PC-9 (cell line): ENCODE measurements at regions of chrX and their contacts with region 1.

Region 1: GRCh38 chrX:53116101-53116500 is 22.2 kb downstream of the KANTR start:
- DNase-seq: no peak
- H3K4me3 ChIP-seq: no peak overlapping the region
- H3K27ac ChIP-seq: no peak overlapping the region
- H3K4me1 ChIP-seq: no peaks in the 10 kb centered on the region
- H3K27me3 ChIP-seq: no peaks in the 10 kb centered on the region
- CTCF ChIP-seq: no peak

Region 2: DNA sequence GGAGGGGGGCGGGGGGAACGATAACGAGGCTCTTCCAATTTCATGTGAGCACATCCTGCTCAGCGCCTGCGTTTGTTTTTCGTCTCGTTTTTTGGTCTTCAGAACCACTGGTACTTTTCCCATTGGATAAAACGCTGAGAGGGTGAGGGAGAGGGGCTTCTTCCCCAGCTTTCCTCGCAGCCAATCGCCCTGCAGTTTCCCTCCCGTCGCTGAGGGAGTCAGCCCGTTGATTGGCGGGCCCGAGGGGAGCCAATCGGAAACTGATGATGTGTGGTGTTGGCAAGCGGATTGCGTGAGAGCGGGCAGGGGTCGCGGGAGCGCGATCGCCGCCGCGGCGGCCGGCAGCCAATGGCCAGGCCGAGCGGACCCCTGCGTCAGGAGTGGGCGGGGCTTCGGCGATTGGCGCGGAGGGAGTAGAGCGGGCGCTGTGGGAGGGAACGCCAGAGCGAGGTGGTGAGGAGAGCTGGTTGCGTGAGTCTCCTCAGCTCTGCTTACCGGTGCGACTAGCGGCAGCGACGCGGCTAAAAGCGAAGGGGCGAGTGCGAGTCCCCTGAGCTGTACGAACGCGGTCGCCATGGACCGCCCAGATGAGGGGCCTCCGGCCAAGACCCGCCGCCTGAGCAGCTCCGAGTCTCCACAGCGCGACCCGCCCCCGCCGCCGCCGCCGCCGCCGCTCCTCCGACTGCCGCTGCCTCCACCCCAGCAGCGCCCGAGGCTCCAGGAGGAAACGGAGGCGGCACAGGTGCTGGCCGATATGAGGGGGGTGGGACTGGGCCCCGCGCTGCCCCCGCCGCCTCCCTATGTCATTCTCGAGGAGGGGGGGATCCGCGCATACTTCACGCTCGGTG is 34.0 kb before region 1 on chrX and contains the start of gene TSPYL2:
- CTCF ChIA-PET with region 1: no interaction called
- POLR2A ChIA-PET with region 1: interaction called, 13 read pairs
- intact Hi-C with region 1: no loop called
- DNase-seq: peak; percentile 79 to 98
- H3K4me3 ChIP-seq: peak within 1 kb of the TSS; percentile 56
- H3K27ac ChIP-seq: 0 out of 2 replicates have a peak within 1 kb of the TSS, but pooled peaks have one; percentile 34
- H3K4me1 ChIP-seq: no peaks in the 10 kb centered on the region
- H3K27me3 ChIP-seq: no peaks in the 10 kb centered on the region
- CTCF ChIP-seq: no peak
- total RNA-seq, gene TSPYL2: 17.2 and 26.0 TPM in 2 replicates